Activated CD4-positive, alpha-beta T cell treated with anti-CD3 and anti-CD28 coated beads for 36 hours (primary cell): ENCODE measurements at regions of chr13 and their contacts with region 1.

Region 1: DNA sequence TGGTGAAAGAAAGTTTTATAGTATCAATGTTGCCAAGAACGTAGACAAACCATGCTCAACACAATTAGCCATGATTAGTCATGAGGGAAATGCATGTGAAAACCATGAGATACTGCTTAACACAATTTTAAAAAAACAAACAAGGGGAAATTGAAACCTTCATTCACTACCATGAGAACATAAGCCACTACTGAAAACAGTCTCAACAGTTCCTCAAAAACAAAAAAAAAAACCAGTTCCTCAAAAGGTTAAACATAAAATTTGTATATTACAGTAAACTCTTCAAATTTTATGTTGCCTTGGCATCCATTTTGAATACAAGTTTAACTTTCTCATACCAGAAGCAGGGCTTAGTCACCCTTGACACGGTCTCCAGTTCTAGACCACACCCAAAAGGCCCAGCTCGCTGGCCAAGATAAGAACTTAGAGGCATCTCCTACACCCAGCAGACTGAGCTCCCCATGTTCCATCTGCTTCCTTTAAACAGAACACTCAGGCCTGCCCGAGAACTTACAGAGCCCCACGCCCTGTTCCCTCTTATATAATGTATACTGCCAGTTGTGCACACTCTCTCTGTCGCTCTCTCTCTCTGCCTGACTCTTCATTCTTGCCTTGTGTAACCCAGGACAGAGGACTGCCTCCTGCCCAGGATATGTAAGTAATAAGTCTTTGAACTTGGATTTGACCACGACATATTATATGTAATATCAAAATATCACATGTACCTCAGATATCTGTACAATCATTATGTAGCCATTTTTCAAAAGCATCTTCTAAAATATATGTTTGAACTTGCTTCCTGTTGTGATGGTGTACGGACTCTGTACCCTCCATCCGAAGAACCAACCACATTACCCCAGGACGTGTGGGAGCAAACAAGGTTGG is 67.4 kb downstream of the STK24 start:
- DNase-seq: peak; percentile 74
- ATAC-seq: peak; percentile 79
- H3K4me3 Mint-ChIP-seq: peak overlapping the region; percentile 50
- H3K27ac Mint-ChIP-seq: peak overlapping the region; percentile 93
- H3K4me1 Mint-ChIP-seq: peaks cover 96% of the 10 kb centered on the region
- H3K27me3 Mint-ChIP-seq: no peaks in the 10 kb centered on the region

Region 2: GRCh38 chr13:98476538-98476966 is 33.0 kb before region 1 on chr13:
- CTCF ChIA-PET with region 1: interaction called, 4 read pairs
- POLR2A ChIA-PET with region 1: interaction called, 4 read pairs
- intact Hi-C with region 1: loop called (anchors 1 kb)
- DNase-seq: peak; percentile 94
- ATAC-seq: peak; percentile 86
- H3K4me3 Mint-ChIP-seq: peak overlapping the region; percentile 63
- H3K27ac Mint-ChIP-seq: peak overlapping the region; percentile 93
- H3K4me1 Mint-ChIP-seq: peaks cover 56% of the 10 kb centered on the region
- H3K27me3 Mint-ChIP-seq: no peaks in the 10 kb centered on the region

Region 3: DNA sequence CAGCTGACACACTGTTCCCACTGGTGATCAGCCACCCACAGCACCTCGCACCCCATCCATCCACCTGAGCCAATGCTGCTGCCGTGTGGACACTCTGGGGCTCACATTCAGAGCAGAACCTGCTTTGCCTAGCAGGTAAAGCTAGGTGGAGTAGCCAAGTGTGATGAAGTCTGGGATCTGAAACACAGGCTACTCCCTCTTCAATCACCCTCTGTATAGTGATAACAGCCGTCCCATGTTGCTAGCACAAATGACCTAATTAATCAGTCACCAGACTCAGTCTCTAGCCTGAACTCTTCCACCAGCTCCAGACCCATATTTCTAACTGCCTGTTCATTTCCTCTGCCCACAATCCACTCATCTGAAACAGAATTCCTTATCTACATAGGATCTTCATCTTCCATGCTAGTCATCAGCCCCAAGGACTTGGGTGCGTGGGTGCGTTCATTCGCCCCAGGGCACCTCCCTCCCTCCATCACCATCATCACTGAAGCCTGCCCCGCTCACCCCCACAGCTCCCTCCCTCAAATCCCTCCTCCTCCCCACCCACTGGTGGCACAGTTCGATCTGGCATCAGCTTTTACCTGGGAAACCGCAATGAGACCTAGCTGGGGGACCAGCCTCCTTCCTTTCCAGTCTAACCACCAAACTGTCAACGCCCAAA is 47.6 kb after region 1 on chr13:
- CTCF ChIA-PET with region 1: interaction called, 4 read pairs
- POLR2A ChIA-PET with region 1: interaction called, 13 read pairs
- intact Hi-C with region 1: no loop called
- DNase-seq: peak; percentile 42
- ATAC-seq: peak; percentile 35
- H3K4me3 Mint-ChIP-seq: peak overlapping the region; percentile 40
- H3K27ac Mint-ChIP-seq: peak overlapping the region; percentile 84
- H3K4me1 Mint-ChIP-seq: peaks cover 82% of the 10 kb centered on the region
- H3K27me3 Mint-ChIP-seq: no peaks in the 10 kb centered on the region

Region 4: GRCh38 chr13:99228737-99229691 is 719.5 kb after region 1 on chr13:
- CTCF ChIA-PET with region 1: no interaction called
- POLR2A ChIA-PET with region 1: no interaction called
- intact Hi-C with region 1: loop called in 1 of 2 experiments (anchors 10 kb)
- DNase-seq: no peak
- ATAC-seq: peak; percentile 67
- H3K4me3 Mint-ChIP-seq: peak overlapping the region; percentile 51
- H3K27ac Mint-ChIP-seq: peak overlapping the region; percentile 89
- H3K4me1 Mint-ChIP-seq: peaks cover 81% of the 10 kb centered on the region
- H3K27me3 Mint-ChIP-seq: no peaks in the 10 kb centered on the region